Endothelial cell of umbilical vein (primary cell): ENCODE measurements at regions of chr2 and their contacts with region 1.

Region 1: DNA sequence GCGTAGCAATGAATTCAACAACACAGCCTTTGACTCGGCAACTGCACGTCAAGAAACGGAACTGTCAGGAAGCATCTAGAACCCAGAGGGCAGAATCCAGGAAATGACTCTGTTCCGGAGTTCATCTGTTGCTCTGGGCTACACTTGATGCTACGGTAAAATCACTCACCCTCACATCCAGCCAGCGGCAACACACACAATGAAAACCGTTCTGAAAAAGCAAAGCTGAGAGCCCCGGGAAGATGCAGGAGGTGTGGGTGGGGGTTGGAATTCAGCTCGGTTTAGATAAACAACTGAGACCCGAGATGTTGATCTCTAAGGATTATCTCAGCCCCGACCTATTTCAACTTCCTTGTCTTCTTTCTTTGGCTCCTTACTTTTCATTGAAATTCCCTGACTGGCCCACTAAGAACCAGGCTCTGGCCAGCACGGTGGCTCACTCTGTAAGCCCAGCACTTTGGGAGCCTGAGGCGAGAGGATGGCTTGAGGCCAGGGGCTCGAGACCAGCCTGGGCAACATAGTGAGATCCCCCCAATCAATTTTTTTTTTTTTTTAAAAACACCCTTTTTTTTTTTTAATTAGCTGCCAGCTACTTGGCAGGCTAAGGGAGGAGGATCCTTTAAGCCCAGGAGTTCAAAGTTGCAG is 13.3 kb upstream of the RAB17 start:
- DNase-seq: peak; percentile 96
- H3K4me3 ChIP-seq: no peak overlapping the region
- H3K27ac ChIP-seq: peak overlapping the region; percentile 91
- H3K4me1 ChIP-seq: peaks cover 29% of the 10 kb centered on the region
- H3K27me3 ChIP-seq: no peaks in the 10 kb centered on the region
- CTCF ChIP-seq: no peak
- POLR2A ChIP-seq: no peak

Region 2: DNA sequence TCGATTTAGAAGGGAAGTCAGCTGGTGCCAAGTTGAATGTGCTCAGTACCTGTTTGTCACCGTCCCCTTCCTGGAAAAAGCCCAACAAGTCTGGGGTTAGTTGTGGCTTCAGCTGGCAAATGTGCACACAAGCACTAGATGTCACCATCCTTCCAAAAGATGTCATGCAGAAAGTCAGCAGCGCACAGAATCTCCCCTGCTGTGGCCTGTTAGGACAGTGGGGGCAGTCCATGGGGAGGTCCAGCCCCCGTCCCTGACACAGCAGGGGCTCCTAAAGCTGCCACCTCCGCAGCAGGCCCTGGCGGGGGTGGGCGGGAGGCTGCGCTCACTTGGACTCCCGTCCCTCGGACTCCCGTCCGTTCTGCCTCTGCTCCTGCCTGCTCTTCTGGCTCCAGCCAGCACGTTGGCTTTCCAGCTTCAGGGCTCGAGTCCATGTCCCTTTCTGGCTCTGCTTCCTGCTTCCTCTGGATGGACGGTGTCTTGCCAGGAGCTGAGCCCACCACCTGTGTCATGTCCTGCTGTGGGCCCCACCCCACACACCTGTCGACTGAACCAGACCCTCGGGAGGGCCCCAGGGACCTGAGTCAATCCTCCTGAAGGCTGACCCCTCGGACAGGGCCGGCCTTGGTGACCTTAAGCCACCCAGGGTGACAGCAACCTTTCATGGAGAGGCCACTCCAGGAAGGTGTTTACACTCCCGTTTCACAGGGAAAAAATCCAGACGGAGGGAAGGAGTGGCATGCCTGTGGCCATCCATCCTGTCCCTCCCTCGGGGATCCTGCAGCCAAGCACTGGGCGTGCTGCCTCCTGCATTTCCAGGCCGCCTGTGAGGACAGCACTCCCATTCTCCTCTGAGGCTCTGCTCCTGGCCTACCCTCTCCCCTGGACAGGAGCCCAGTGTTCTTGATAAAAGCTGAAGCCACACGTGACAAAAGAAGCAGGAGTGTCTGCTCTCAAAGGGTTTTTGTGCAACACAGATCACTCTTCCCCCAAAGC is 21.8 kb before region 1 on chr2:
- CTCF ChIA-PET with region 1: interaction called, 6 read pairs
- POLR2A ChIA-PET with region 1: no interaction called
- dilution Hi-C with region 1: no loop called
- intact Hi-C with region 1: loop called (anchors 1 kb)
- DNase-seq: peak; percentile 79
- H3K4me3 ChIP-seq: no peak overlapping the region
- H3K27ac ChIP-seq: no peak overlapping the region
- H3K4me1 ChIP-seq: no peaks in the 10 kb centered on the region
- H3K27me3 ChIP-seq: peaks cover 2% of the 10 kb centered on the region in 2 experiments
- CTCF ChIP-seq: peak; percentile 55 to 61
- POLR2A ChIP-seq: no peak

Region 3: GRCh38 chr2:237627441-237628246 is 23.8 kb after region 1 on chr2 and contains the start of gene LRRFIP1:
- CTCF ChIA-PET with region 1: interaction called, 4 read pairs
- POLR2A ChIA-PET with region 1: no interaction called
- dilution Hi-C with region 1: no loop called
- intact Hi-C with region 1: loop called (anchors 1 kb)
- DNase-seq: peak; percentile 31
- H3K4me3 ChIP-seq: peak within 1 kb of the TSS; percentile 23 to 81 (median 42)
- H3K27ac ChIP-seq: peak within 1 kb of the TSS; percentile 27
- H3K4me1 ChIP-seq: peaks cover 13% of the 10 kb centered on the region
- H3K27me3 ChIP-seq: no peaks in the 10 kb centered on the region
- CTCF ChIP-seq: peak in 1 of 2 donors; percentile 17
- POLR2A ChIP-seq: no peak
- total RNA-seq, gene LRRFIP1: 162 and 179 TPM in 2 replicates

Region 4: GRCh38 chr2:237685408-237685807 is 81.6 kb after region 1 on chr2:
- CTCF ChIA-PET with region 1: interaction called, 4 read pairs
- POLR2A ChIA-PET with region 1: interaction called, 3 read pairs
- dilution Hi-C with region 1: no loop called
- intact Hi-C with region 1: loop called (anchors 1 kb)
- DNase-seq: no peak
- H3K4me3 ChIP-seq: no peak overlapping the region
- H3K27ac ChIP-seq: no peak overlapping the region
- H3K4me1 ChIP-seq: peaks cover 27% of the 10 kb centered on the region
- H3K27me3 ChIP-seq: no peaks in the 10 kb centered on the region
- CTCF ChIP-seq: peak; percentile 20 to 27
- POLR2A ChIP-seq: no peak

Region 5: DNA sequence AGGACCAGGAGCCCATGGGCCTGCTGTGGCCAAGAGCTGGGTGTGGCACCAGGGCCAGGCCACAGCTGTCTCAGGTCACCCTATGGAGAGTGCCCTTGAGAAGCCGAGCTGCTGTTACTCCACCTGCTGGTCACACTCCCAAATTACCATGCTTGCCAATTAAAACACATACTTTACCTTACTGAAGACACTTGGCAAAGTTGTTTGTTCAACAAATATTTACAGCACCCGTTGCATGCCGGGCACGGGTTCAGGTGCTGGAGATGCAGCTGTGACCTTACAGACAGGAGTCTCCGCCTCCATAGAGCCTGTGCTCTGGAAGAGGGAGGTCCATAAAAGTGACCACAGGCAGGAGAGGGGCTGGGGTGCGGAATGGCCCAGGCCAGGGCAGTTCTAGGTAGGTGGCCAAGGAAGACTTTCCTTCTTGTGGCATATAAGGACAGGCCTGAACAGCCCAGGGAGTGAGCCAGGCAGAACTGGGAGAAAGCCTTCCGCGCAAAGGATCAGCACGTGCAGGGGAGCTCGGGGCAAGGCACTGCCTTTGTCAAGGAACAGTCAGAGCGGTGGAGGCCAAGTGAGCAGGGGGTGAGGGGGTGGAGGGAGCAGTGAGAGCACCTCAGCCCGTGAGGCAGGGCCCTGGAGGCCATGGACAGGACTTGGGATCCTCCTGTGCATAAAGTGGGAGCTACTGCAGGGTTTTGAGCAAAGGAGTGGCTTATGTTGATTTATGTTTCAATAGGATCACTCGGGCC is 171.1 kb after region 1 on chr2:
- CTCF ChIA-PET with region 1: interaction called, 3 read pairs
- POLR2A ChIA-PET with region 1: no interaction called
- dilution Hi-C with region 1: no loop called
- intact Hi-C with region 1: loop called (anchors 1 kb)
- DNase-seq: peak; percentile 69
- H3K4me3 ChIP-seq: no peak overlapping the region
- H3K27ac ChIP-seq: no peak overlapping the region
- H3K4me1 ChIP-seq: no peaks in the 10 kb centered on the region
- H3K27me3 ChIP-seq: no peaks in the 10 kb centered on the region
- CTCF ChIP-seq: peak; percentile 76 to 77
- POLR2A ChIP-seq: no peak